OCI-LY7 (cell line): ENCODE measurements at regions of chr17 and their contacts with region 1.

Region 1: GRCh38 chr17:17303010-17303846 is at the start of gene NT5M:
- DNase-seq: peak; percentile 85
- H3K4me3 ChIP-seq: peak within 1 kb of the TSS; percentile 70
- H3K27ac ChIP-seq: peak within 1 kb of the TSS; percentile 77
- H3K4me1 ChIP-seq: peaks cover 48% of the 10 kb centered on the region
- CTCF ChIP-seq: no peak
- total RNA-seq, gene NT5M: 8.2 and 10.4 TPM in 2 replicates

Region 2: GRCh38 chr17:17264430-17264829 is 38.8 kb before region 1 on chr17:
- CTCF ChIA-PET with region 1: no interaction called
- POLR2A ChIA-PET with region 1: no interaction called
- intact Hi-C with region 1: no loop called
- DNase-seq: no peak
- H3K4me3 ChIP-seq: no peak overlapping the region
- H3K27ac ChIP-seq: no peak overlapping the region
- H3K4me1 ChIP-seq: no peaks in the 10 kb centered on the region
- CTCF ChIP-seq: no peak

Region 3: DNA sequence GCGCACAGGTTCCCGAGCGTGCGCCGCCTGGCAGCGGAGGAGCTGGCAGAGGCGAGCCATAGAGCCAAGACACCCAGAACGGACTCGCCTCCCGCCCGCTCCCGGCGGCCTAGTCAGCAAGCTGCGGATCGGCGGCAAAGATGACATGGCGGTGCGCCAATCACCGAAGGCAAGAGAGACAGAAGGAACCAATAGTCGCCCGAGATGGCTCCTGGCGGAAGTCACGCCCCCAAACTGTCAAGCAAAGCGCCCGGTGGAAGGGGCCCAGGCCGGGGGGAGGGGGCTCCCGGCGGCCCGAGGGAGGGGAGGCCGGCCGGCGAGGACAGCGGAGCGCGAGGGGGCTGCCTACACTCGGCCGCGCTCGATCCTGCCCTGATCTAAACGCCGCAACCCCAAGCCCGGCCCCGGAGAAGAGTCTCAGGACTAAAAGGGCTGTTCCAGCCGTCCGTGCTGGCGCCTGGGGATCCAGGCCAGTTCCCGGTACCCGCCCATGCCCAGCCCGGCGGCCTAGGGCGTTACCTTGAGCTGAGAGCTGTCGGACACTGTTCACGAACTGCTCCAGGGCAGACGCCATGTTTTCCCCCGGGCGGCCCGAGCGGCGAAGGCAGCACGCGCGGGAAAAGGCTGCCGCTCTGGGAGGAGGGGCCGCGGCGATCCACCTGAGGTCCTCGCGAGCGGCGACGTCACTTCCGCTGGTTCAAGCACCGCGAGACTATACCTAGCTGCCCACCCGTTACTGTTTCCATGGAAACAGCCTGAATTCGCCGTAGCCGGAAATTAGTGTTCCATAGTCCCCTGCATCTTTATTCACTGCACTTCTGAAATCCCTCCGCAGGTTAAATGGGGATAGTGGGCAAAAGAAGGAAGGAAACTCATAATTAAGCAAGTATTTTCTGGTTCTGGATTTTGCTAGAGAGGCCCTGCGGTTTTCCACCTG is 22.3 kb before region 1 on chr17 and contains the start of gene COPS3:
- CTCF ChIA-PET with region 1: interaction called, 3 read pairs
- POLR2A ChIA-PET with region 1: interaction called, 7 read pairs
- intact Hi-C with region 1: loop called (anchors 1 kb)
- DNase-seq: peak; percentile 99
- H3K4me3 ChIP-seq: peak within 1 kb of the TSS; percentile 80
- H3K27ac ChIP-seq: peak within 1 kb of the TSS; percentile 83
- H3K4me1 ChIP-seq: peaks cover 25% of the 10 kb centered on the region
- CTCF ChIP-seq: no peak
- total RNA-seq, gene COPS3: 69.4 and 83.9 TPM in 2 replicates

Region 4: GRCh38 chr17:17376362-17376761 is 73.1 kb after region 1 on chr17:
- CTCF ChIA-PET with region 1: no interaction called
- POLR2A ChIA-PET with region 1: no interaction called
- intact Hi-C with region 1: no loop called
- DNase-seq: no peak
- H3K4me3 ChIP-seq: no peak overlapping the region
- H3K27ac ChIP-seq: no peak overlapping the region
- H3K4me1 ChIP-seq: no peaks in the 10 kb centered on the region
- CTCF ChIP-seq: no peak